ENCODE measurements at regions of chr13 and their contacts with region 1.

Region 1: DNA sequence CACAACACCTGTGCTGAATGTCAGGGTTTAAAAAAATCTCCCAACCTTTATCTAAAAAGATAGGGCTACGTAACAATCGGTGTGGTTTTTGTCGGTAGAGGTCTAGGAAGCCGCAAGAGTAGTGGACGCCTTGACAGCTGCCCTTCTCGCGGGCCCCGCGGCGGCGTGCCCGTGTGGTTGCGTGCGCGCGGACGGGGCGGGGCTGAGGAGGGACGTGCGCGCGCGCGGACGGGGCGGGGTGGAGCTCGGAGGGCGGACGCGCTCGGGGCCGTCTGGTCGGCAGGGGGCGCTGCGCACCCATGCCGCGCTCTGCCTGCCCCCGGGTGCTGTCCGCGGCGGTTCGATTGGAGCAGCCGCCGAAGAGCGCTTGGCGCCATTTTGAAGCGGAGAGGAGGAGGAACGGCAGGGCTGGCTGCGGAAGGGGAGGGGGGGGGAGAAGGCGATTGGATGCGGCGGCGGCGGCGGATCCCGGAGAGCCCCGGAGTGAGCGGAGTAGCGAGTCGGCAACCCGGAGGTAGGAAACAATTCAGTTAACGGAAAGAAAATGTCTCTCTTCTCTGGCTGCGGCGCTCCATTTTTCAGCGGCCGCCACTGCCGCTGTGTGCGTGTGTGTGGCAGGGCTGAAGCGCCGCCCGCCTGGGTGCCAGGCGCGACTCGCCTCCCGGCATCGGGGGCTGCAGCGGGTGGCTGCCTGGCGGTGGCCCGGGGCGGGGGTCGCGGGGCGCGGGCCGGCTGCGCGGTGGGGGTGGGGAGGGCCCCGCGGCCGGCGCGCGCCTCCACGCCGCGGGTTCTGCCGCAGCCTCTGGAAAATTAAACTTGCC is at the start of gene PDS5B:
- DNase-seq: peak; percentile 94
- H3K4me3 ChIP-seq: peak within 1 kb of the TSS; percentile 73
- H3K27ac ChIP-seq: peak within 1 kb of the TSS; percentile 94
- H3K4me1 ChIP-seq: no peaks in the 10 kb centered on the region
- H3K27me3 ChIP-seq: no peaks in the 10 kb centered on the region
- CTCF ChIP-seq: peak; percentile 65
- total RNA-seq, gene PDS5B: 34.0 to 37.0 TPM

Region 2: GRCh38 chr13:32381539-32381938 is 204.8 kb before region 1 on chr13:
- intact Hi-C with region 1: loop called (anchors 10 kb)
- DNase-seq: no peak
- H3K4me3 ChIP-seq: no peak overlapping the region
- H3K27ac ChIP-seq: no peak overlapping the region
- H3K4me1 ChIP-seq: no peaks in the 10 kb centered on the region
- H3K27me3 ChIP-seq: no peaks in the 10 kb centered on the region
- CTCF ChIP-seq: no peak

Region 3: GRCh38 chr13:32474999-32475792 is 111.1 kb before region 1 on chr13:
- intact Hi-C with region 1: no loop called
- DNase-seq: no peak
- H3K4me3 ChIP-seq: no peak overlapping the region
- H3K27ac ChIP-seq: no peak overlapping the region
- H3K4me1 ChIP-seq: no peaks in the 10 kb centered on the region
- H3K27me3 ChIP-seq: no peaks in the 10 kb centered on the region
- CTCF ChIP-seq: no peak

Region 4: GRCh38 chr13:32639502-32640105 is 53.3 kb after region 1 on chr13:
- intact Hi-C with region 1: loop called (anchors 5 kb)
- DNase-seq: peak; percentile 48
- H3K4me3 ChIP-seq: no peak overlapping the region
- H3K27ac ChIP-seq: no peak overlapping the region
- H3K4me1 ChIP-seq: no peaks in the 10 kb centered on the region
- H3K27me3 ChIP-seq: no peaks in the 10 kb centered on the region
- CTCF ChIP-seq: peak; percentile 67

Region 5: GRCh38 chr13:32650705-32651311 is 64.5 kb after region 1 on chr13:
- intact Hi-C with region 1: loop called (anchors 5 kb)
- DNase-seq: peak; percentile 62
- H3K4me3 ChIP-seq: no peak overlapping the region
- H3K27ac ChIP-seq: no peak overlapping the region
- H3K4me1 ChIP-seq: no peaks in the 10 kb centered on the region
- H3K27me3 ChIP-seq: no peaks in the 10 kb centered on the region
- CTCF ChIP-seq: peak; percentile 77

Region 6: DNA sequence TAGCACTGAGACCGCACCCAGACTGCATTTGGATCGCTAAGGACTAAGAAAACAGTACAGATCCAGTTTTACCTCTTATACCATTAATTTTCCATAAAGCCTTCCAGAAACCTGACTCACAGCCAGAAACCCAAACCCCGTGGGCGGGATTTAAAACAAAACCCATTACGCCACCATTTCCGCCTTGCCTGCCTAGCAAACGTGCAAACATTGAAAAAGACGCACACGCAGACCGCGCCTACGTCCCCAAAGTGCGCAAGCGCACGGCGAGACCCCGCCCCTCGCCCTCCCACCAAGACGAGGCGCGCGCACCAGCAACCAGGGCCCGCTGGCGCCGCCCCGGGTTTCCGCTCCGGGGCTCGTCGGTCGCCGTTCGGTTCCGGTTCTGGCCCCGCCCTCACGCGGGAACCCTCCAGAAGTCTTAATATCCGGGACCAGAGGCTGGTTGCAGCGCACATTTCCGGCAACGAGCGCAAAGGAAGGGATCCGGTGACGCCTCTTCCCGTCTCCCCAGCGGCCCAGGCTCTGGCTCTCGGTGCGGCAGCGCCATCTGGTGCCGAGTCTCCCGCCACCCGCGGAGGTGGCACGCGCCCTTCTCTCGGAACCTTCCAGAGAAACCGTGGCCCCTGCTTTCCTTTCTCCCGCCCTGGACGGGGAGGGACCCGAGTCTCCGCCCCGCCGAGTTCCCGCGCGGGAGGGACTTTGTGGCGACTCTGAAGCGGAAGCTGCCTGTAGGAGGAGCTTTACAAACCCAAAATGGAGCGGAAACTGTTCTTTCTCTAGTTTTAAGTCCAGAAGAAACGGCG is 956.2 kb after region 1 on chr13:
- intact Hi-C with region 1: loop called (anchors 5 kb)
- DNase-seq: peak; percentile 98
- H3K4me3 ChIP-seq: peak overlapping the region; percentile 24
- H3K27ac ChIP-seq: peak overlapping the region; percentile 95
- H3K4me1 ChIP-seq: peaks cover 9% of the 10 kb centered on the region
- H3K27me3 ChIP-seq: no peaks in the 10 kb centered on the region
- CTCF ChIP-seq: peak; percentile 60

Measured in colonic mucosa (tissue), 4 donors.